AG04450 (cell line): ENCODE measurements at regions of chr17 and their contacts with region 1.

Region 1: GRCh38 chr17:56715613-56716357 is 117.9 kb downstream of the C17orf67 start:
- DNase-seq: peak; percentile 62
- H3K4me3 ChIP-seq: no peak overlapping the region
- H3K27ac ChIP-seq: no peak overlapping the region
- H3K27me3 ChIP-seq: no peaks in the 10 kb centered on the region
- CTCF ChIP-seq: peak; percentile 83

Region 2: GRCh38 chr17:56125830-56126819 is 589.7 kb before region 1 on chr17:
- CTCF ChIA-PET with region 1: interaction called, 12 read pairs
- POLR2A ChIA-PET with region 1: no interaction called
- DNase-seq: peak; percentile 30
- H3K4me3 ChIP-seq: no peak overlapping the region
- H3K27ac ChIP-seq: no peak overlapping the region
- H3K27me3 ChIP-seq: no peaks in the 10 kb centered on the region
- CTCF ChIP-seq: peak; percentile 80

Region 3: DNA sequence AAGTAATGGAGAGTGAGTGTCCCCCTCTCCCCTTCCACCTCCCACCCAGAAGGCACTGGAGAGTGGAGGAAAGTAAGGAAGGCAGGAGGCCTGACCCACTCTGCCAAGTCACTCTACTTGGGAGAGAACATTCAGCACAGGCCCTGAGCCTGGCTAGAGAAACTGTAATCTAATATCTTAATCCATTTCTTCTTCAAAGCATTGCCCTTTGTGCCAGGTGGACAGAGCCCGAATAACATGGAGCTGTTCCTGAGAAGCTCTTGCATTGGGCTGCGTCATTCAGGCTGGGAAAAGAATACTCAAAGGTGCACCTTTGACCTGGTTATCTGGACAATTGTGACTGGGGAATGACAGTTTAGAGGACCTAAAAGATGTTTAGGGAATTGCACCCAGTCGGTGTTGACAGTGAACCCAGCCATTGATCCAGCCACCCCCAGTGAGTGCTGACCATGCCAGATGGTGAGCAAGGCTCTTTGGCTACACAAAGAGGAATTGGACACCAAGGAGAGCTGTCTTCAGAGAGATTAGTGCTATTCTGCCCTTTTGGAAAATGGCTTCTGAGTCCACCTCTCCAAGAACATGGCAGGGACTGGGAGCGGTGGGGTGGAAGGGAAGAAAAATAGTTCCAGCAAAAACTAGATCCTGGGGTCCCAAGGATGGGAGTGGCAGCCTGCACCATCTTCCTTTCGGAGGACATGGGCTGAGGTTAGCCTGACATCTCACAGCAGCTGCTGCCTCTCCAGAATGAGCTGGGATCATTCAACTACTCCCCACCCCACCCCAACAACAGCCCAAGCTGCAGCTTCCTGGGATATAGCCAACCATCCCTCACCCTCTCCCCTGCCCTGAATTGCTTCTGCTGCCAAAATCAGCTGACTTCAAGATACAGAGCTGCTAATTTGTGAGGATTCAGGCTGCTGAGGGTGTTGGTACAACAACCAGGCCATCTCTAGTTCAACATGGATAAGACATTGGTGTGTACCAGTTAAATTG is 133.9 kb before region 1 on chr17:
- CTCF ChIA-PET with region 1: interaction called, 16 read pairs
- POLR2A ChIA-PET with region 1: interaction called, 3 read pairs
- DNase-seq: no peak
- H3K4me3 ChIP-seq: no peak overlapping the region
- H3K27ac ChIP-seq: no peak overlapping the region
- H3K27me3 ChIP-seq: peaks cover 10% of the 10 kb centered on the region
- CTCF ChIP-seq: no peak

Region 4: DNA sequence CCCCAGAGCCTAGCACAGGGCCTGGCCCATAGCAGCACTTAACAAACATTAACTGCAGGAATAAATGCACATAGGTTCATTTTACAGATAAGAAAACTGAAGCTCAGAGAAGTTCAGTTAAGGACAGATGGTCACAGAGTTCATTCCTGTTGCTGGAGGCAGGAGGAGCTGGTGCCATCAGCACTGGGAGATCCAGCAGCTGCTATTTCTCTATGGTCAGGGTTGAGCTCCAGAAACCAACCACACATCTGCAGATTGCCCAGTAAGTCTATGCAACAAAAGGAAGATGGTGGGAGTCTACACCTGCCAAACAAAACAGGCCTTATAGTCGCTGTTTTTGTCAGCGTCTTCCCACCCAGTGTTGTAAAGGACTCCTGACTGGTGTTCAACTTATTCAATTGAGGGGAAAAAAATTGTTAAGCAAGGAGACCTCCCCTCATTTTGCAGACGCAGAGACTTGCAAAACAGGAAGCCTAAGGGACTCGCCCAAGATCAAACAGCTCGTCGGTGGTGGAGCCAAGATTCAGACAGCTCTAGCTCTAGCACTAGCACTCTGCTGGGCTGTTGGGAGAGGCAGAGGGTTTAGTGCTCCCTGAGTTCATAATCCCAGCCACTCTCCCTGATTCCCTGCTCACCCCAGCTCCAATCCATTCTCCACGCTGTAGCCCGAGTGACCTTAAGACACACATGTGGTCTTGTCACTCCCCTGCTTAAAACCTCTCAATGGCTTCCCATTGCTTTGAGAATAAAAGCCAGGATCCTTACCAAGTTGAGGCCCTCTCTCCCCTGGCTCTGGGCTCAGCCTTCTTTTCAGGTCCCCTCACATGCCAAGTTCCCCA is 113.3 kb before region 1 on chr17:
- CTCF ChIA-PET with region 1: interaction called, 272 read pairs
- POLR2A ChIA-PET with region 1: no interaction called
- DNase-seq: no peak
- H3K4me3 ChIP-seq: no peak overlapping the region
- H3K27ac ChIP-seq: no peak overlapping the region
- H3K27me3 ChIP-seq: peaks cover 6% of the 10 kb centered on the region
- CTCF ChIP-seq: no peak

Region 5: DNA sequence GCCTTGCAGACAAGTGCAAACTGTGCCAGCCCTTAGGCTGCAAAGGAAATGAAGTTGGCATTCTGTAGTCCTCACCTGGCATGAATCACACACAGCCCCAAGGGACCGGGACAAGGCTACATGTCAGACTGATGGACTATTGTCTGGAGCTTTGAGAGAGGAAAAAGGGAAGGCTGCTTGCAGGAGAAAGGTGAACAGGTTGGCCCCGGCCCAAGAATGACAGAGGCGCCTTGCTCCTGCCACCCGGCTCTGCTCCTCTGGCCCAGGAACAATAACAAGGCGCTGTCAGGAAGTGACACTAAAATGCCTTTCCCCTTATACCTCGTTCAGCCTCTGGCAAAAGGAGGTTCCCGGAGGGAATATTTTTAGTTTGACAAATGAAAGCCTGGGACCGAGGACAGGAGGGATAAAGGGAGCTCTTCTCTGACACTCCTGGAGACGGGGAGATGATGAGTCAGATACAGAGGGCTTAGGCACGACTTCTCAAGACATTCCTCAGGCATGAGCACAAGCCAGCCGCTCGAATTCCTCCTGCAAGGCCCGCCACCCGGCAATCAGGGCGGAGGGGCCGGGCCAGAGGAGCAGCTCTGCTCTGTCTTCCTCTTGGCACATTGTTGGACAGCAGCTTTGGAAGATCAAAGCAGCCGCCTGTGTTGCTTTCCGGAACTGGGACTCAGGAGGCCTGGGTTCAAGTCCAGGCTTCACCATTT is 16.4 kb before region 1 on chr17:
- CTCF ChIA-PET with region 1: interaction called, 47 read pairs
- POLR2A ChIA-PET with region 1: no interaction called
- DNase-seq: peak; percentile 94
- H3K4me3 ChIP-seq: 0 out of 2 replicates have a peak overlapping the region, but pooled peaks have one; percentile 12
- H3K27ac ChIP-seq: peak overlapping the region; percentile 79
- H3K27me3 ChIP-seq: no peaks in the 10 kb centered on the region
- CTCF ChIP-seq: no peak

Region 6: GRCh38 chr17:56772442-56772841 is 56.7 kb after region 1 on chr17:
- CTCF ChIA-PET with region 1: interaction called, 11 read pairs
- POLR2A ChIA-PET with region 1: no interaction called
- DNase-seq: no peak
- H3K4me3 ChIP-seq: no peak overlapping the region
- H3K27ac ChIP-seq: no peak overlapping the region
- H3K27me3 ChIP-seq: no peaks in the 10 kb centered on the region
- CTCF ChIP-seq: no peak

Region 7: GRCh38 chr17:56939901-56940343 is 224.1 kb after region 1 on chr17:
- CTCF ChIA-PET with region 1: interaction called, 10 read pairs
- POLR2A ChIA-PET with region 1: no interaction called
- DNase-seq: peak; percentile 20
- H3K4me3 ChIP-seq: no peak overlapping the region
- H3K27ac ChIP-seq: no peak overlapping the region
- H3K27me3 ChIP-seq: no peaks in the 10 kb centered on the region
- CTCF ChIP-seq: peak; percentile 75